Calu3 (cell line): ENCODE measurements at regions of chr5 and their contacts with region 1.

Region 1: DNA sequence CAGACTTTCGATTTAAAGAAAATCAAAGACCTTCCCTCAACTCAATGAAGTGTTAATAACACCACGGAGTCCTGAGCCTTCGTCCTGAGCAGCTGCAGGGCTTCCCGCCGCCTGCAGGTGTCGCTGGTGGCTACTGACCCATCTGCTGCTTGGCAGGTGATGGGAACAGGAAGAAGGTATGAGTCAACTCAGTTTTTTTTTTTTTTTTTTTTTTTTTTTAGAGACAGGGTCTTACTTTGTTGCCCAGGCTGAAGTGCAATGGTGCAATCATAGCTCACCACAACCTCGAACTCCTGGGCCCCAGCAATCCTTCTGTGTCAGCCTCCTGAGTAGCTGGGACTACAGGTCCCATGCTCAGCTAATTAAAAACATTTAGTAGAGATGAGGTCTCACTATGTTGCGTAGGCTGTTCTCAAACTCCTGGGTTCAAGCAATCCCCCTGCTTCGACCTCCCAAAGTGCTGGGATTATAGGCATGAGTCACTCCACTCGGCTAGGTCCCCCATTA is 185.7 kb upstream of the IL12B start:
- DNase-seq: peak; percentile 89
- H3K4me3 Mint-ChIP-seq: no peak overlapping the region
- H3K27ac Mint-ChIP-seq: no peak overlapping the region
- H3K4me1 Mint-ChIP-seq: peaks cover 42% of the 10 kb centered on the region
- H3K27me3 Mint-ChIP-seq: no peaks in the 10 kb centered on the region
- CTCF ChIP-seq: peak; percentile 92

Region 2: GRCh38 chr5:159198063-159199036 is 317.6 kb before region 1 on chr5:
- CTCF ChIA-PET with region 1: no interaction called
- intact Hi-C with region 1: no loop called
- DNase-seq: no peak
- H3K4me3 Mint-ChIP-seq: no peak overlapping the region
- H3K27ac Mint-ChIP-seq: peak overlapping the region; percentile 20
- H3K4me1 Mint-ChIP-seq: peaks cover 44% of the 10 kb centered on the region
- H3K27me3 Mint-ChIP-seq: no peaks in the 10 kb centered on the region
- CTCF ChIP-seq: no peak

Region 3: GRCh38 chr5:159571495-159572238 is 55.7 kb after region 1 on chr5:
- CTCF ChIA-PET with region 1: interaction called, 4 read pairs
- intact Hi-C with region 1: loop called (anchors 1 kb)
- DNase-seq: peak; percentile 29
- H3K4me3 Mint-ChIP-seq: no peak overlapping the region
- H3K27ac Mint-ChIP-seq: no peak overlapping the region
- H3K4me1 Mint-ChIP-seq: peaks cover 14% of the 10 kb centered on the region
- H3K27me3 Mint-ChIP-seq: no peaks in the 10 kb centered on the region
- CTCF ChIP-seq: no peak

Region 4: DNA sequence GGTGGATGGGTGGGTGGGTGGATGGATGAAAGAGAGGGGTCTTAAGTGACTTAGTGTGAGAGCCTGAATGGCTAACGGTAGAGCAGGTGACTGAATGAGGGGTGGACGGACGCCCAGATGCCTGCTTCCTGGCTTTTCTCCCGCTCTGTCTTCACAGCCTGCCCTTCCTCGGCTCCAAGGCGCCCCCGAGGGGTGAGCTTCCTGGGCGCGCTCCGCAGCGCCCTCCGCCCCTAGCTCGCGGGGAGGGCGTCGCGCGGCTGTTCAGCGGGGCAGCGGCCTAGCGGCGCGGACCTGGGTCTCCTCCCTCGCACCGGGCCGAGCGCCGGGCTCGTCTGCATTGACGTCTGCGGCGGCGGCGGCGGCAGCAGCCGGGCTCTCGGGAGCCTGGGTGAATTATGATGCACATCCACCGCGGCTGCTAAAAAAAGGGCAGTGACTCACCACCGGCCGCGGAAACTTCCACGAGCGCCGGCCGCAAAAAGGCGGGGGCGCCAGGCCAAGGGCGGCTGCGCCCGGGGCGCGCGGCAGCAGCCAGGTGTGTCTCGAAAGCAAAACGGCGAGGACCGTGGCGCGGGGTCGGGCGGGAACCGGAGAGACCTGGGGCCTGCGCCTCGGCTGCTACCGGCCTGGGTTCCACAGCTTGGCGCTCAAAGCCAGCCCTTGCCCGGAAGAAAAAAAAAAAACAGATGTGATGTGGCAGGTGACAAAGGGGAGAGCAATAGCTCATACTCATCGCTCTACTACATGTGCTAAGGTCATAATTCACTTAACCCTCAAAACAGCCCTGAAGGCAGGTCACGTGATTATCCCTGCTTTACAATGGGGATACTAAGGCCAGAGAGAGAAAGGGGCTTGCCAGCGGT is 257.3 kb after region 1 on chr5:
- CTCF ChIA-PET with region 1: no interaction called
- intact Hi-C with region 1: loop called (anchors 10 kb)
- DNase-seq: peak; percentile 77
- H3K4me3 Mint-ChIP-seq: peak overlapping the region; percentile 64
- H3K27ac Mint-ChIP-seq: peak overlapping the region; percentile 67
- H3K4me1 Mint-ChIP-seq: peaks cover 21% of the 10 kb centered on the region
- H3K27me3 Mint-ChIP-seq: peaks cover 3% of the 10 kb centered on the region
- CTCF ChIP-seq: peak; percentile 48

Region 5: GRCh38 chr5:159965031-159965837 is 449.3 kb after region 1 on chr5:
- CTCF ChIA-PET with region 1: interaction called, 3 read pairs
- intact Hi-C with region 1: loop called (anchors 5 kb)
- DNase-seq: peak; percentile 76
- H3K4me3 Mint-ChIP-seq: no peak overlapping the region
- H3K27ac Mint-ChIP-seq: no peak overlapping the region
- H3K4me1 Mint-ChIP-seq: peaks cover 10% of the 10 kb centered on the region
- H3K27me3 Mint-ChIP-seq: no peaks in the 10 kb centered on the region
- CTCF ChIP-seq: peak; percentile 81